ENCODE measurements at regions of chr6 and their contacts with region 1.

Region 1: DNA sequence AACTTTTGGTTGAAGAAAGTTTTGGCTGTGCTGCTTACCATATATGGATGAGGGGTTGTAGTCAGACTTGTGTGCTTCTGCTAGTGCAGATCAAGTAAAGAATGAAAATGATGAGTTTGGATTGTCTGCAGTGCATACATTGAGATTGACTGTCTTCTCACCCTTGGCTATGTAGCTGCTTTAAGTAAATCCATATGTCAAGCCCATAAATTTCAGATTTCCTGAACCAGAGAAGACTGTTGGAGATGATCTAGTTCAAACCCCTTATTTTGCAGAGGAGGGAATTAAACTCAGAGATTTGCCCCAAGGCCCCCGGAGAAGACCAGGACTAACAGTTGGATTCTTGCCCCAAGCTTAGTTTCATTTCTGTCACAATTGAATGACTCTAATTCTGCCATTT is 67.2 kb downstream of the PKIB start:
- DNase-seq: no peak
- ATAC-seq: no peak
- H3K4me3 ChIP-seq: no peak overlapping the region
- H3K27ac ChIP-seq: peak overlapping the region; percentile 50
- H3K4me1 ChIP-seq: peaks cover 13% of the 10 kb centered on the region
- H3K27me3 ChIP-seq: no peaks in the 10 kb centered on the region
- CTCF ChIP-seq: no peak

Region 2: DNA sequence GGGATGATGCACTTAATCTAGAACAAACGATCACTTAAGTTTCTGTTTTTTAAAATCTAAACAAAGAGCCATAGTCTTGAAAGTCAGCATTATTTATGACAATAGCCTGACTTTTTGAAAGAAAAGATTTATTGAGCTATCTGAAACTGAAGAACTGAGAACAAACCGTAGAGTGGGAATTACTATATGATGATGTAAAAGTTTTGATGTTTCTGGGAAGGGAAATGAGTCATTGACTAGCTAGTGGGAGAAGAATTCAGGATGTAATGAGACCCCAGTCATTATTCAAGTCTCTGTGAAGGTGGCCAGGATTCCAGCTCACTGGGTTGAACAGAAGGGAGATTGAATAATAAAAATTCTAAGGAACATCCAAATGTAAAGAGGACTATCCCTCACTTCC is 18.7 kb after region 1 on chr6:
- CTCF ChIA-PET with region 1: no interaction called
- POLR2A ChIA-PET with region 1: no interaction called
- intact Hi-C with region 1: loop called (anchors 2 kb)
- DNase-seq: peak; percentile 83
- ATAC-seq: peak; percentile 46
- H3K4me3 ChIP-seq: peak overlapping the region; percentile 48
- H3K27ac ChIP-seq: peak overlapping the region; percentile 99
- H3K4me1 ChIP-seq: peaks cover 53% of the 10 kb centered on the region
- H3K27me3 ChIP-seq: no peaks in the 10 kb centered on the region
- CTCF ChIP-seq: no peak

Measured in PC-3 (cell line).